Pancreas (tissue), 10 donors: ENCODE measurements at regions of chr6 and their contacts with region 1.

Region 1: GRCh38 chr6:113858480-113859348 is 1.6 kb downstream of the MARCKS start:
- DNase-seq: peak; percentile 92 to 100 (median 94)
- ATAC-seq: peak; percentile 72 to 82 (median 82)
- H3K4me3 ChIP-seq: peak overlapping the region; percentile 80 to 90 (median 82)
- H3K27ac ChIP-seq: peak overlapping the region; percentile 97 to 100 (median 99)
- H3K4me1 ChIP-seq: peaks cover 0 to 21% (median 16%) of the 10 kb centered on the region in 3 donors
- H3K27me3 ChIP-seq: no peaks in the 10 kb centered on the region
- CTCF ChIP-seq: peak; percentile 95 to 99 (median 96)

Region 2: DNA sequence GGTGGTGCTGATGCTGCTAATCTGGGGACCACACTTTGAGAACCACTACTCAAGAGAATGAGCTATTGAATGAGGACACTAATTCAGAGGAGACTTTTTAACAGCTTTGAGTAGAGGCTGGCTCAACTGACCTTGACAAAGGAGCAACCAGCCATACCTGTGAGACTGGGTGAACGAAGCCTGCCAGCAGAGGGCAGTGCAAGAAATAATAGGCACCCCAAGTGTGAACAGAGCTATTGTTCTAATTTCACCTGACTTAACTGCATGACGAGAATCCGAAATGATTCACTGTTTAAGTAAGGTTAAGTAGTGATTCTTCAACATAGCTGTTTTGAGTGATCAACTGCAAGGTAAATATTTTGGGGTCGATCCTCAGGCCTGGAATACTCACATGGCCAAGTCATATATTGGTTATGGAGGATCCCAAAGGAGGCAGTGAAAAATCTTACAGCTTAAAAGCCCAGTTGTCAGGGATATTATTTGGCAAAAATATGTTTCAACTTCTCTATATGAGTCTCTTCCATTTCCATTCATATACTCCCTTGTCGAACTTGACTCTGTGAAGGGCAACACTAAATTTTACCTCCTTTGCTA is 552.1 kb before region 1 on chr6:
- intact Hi-C with region 1: loop called in 1 of 3 experiments (anchors 10 kb)
- DNase-seq: peak; percentile 72 to 79 (median 76)
- ATAC-seq: peak; percentile 91 to 100 (median 100)
- H3K4me3 ChIP-seq: no peak overlapping the region
- H3K27ac ChIP-seq: no peak overlapping the region
- H3K4me1 ChIP-seq: no peaks in the 10 kb centered on the region
- H3K27me3 ChIP-seq: no peaks in the 10 kb centered on the region
- CTCF ChIP-seq: peak; percentile 24 to 72 (median 64)

Region 3: GRCh38 chr6:113642714-113643406 is 215.9 kb before region 1 on chr6:
- intact Hi-C with region 1: loop called in 1 of 3 experiments (anchors 10 kb)
- DNase-seq: peak in 4 of 6 donors; percentile 84 to 97 (median 94)
- ATAC-seq: peak; percentile 89 to 96 (median 93)
- H3K4me3 ChIP-seq: peak overlapping the region in 1 of 4 donors; percentile 20
- H3K27ac ChIP-seq: peak overlapping the region; percentile 23 to 83 (median 76)
- H3K4me1 ChIP-seq: peaks cover 21 to 51% (median 33%) of the 10 kb centered on the region in 3 donors
- H3K27me3 ChIP-seq: no peaks in the 10 kb centered on the region
- CTCF ChIP-seq: no peak

Region 4: DNA sequence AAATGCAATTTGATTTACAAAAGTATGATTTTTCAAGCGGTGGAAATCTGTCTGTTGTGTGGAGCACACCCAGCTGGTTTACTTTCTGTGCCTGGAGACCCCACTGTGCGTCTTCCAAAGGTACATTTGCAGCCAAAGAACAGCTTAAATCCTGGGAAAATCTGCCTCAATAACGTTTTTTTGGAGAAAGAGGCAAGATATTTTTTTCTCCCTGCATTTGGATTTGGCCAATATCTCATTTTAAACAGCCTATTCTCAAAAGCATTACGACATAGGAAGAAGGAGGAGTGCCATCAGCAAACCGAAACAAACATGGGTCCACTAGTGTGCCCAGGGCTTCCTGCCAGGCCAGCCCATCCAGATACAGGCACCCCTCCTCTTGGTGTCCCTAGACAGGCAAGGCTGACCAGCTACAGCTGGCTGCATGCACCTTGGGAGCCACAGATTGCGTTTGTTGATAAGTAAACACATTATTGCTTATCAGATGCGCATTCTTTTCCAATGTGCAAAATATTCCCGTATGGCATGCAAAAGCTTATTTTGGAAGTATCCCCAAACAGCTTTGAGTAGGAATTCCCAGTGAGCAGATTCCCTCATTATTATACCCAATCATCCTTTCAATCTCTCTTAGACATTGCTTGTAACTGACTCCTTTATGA is 186.1 kb before region 1 on chr6:
- intact Hi-C with region 1: loop called in 1 of 3 experiments (anchors 10 kb)
- DNase-seq: peak in 1 of 6 donors; percentile 33
- ATAC-seq: peak in 3 of 4 donors; percentile 31 to 58 (median 58)
- H3K4me3 ChIP-seq: peak overlapping the region in 1 of 4 donors; percentile 9
- H3K27ac ChIP-seq: peak overlapping the region in 2 of 4 donors; percentile 44 to 86
- H3K4me1 ChIP-seq: peaks cover 19 to 66% (median 20%) of the 10 kb centered on the region in 3 donors
- H3K27me3 ChIP-seq: no peaks in the 10 kb centered on the region
- CTCF ChIP-seq: no peak

Region 5: GRCh38 chr6:113697632-113698410 is 160.9 kb before region 1 on chr6:
- intact Hi-C with region 1: loop called in 1 of 3 experiments (anchors 5 kb)
- DNase-seq: no peak
- ATAC-seq: no peak
- H3K4me3 ChIP-seq: no peak overlapping the region
- H3K27ac ChIP-seq: no peak overlapping the region
- H3K4me1 ChIP-seq: peaks cover 14 to 45% (median 22%) of the 10 kb centered on the region in 3 donors
- H3K27me3 ChIP-seq: no peaks in the 10 kb centered on the region
- CTCF ChIP-seq: no peak